PC-3 (cell line): ENCODE measurements at regions of chr10 and their contacts with region 1.

Region 1: GRCh38 chr10:35040760-35041501 is 49.2 kb downstream of the CUL2 start:
- DNase-seq: peak; percentile 72
- ATAC-seq: peak; percentile 77
- H3K4me3 ChIP-seq: no peak overlapping the region
- H3K27ac ChIP-seq: peak overlapping the region; percentile 49
- H3K4me1 ChIP-seq: peaks cover 46% of the 10 kb centered on the region
- H3K27me3 ChIP-seq: no peaks in the 10 kb centered on the region
- CTCF ChIP-seq: no peak

Region 2: DNA sequence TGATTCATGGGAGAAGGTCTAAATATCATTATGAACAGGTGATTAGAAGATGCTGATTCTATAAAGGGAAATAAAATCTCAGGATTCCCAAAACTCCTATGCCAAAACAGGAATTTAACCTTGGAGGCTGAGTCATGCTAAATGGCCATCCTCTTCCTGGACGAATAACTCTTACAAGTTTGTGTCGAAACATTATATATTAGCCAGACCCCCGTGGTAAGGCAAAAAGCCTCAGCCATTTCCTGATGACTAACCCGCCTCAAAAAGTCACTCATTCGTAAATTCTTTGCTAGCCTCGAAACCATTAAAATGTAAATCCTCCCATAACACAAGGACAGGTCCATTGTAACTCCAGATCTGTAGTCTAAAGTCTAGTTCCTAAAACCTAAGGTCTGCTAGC is 17.2 kb after region 1 on chr10:
- CTCF ChIA-PET with region 1: interaction called, 4 read pairs
- POLR2A ChIA-PET with region 1: interaction called, 5 read pairs
- intact Hi-C with region 1: loop called (anchors 1 kb)
- DNase-seq: peak; percentile 100
- ATAC-seq: peak; percentile 94
- H3K4me3 ChIP-seq: peak overlapping the region; percentile 16
- H3K27ac ChIP-seq: peak overlapping the region; percentile 77
- H3K4me1 ChIP-seq: peaks cover 43% of the 10 kb centered on the region
- H3K27me3 ChIP-seq: no peaks in the 10 kb centered on the region
- CTCF ChIP-seq: no peak

Region 3: DNA sequence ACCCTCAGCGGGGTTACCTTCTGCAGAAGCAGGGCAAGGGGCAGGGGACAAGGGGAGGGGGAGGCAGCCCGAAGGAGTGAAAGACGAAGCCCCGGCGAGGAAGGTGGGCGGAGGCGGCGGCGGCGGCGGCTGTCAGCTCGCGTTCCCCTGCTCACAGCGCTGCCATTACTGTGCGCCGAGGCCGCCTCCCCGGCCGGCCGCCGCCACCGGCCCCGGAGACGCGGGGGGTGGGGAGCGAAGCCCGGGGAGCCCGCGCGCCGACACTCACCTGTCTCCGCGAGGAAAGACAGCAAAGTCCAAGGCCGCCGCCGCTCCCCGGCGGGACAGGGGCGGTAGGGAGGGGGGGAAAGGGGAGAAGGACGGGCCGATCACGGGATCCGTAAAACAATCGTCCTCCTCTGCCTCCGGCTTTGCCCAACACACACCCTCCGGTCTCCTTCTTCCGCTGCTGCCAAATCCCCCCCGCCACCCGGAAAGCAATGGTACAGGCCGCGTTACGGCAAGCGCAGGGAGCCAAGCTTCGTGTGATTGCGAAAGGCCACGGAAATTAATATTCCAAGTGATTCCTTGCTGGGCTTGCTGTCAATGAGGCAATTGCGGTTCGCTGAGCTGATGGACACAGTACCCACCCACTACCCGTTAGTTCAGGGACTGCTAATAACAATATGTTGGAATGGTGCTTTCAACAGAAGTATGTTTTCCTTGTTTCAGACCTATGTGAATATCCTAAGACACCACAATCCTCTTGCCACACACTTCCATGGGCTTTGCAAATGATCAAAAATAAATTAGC is 49.4 kb after region 1 on chr10 and contains the start of gene CUL2:
- CTCF ChIA-PET with region 1: no interaction called
- POLR2A ChIA-PET with region 1: interaction called, 3 read pairs
- intact Hi-C with region 1: loop called (anchors 2 kb)
- DNase-seq: peak; percentile 100
- ATAC-seq: peak; percentile 93
- H3K4me3 ChIP-seq: peak within 1 kb of the TSS; percentile 77
- H3K27ac ChIP-seq: peak within 1 kb of the TSS; percentile 73
- H3K4me1 ChIP-seq: peaks cover 25% of the 10 kb centered on the region
- H3K27me3 ChIP-seq: no peaks in the 10 kb centered on the region
- CTCF ChIP-seq: no peak
- total RNA-seq, gene CUL2: 119 and 129 TPM in 2 replicates